ENCODE measurements at regions of chr13 and their contacts with region 1.

Region 1: GRCh38 chr13:80363890-80364503 is 23.1 kb upstream of the SPRY2 start:
- DNase-seq: no peak
- H3K4me3 Mint-ChIP-seq: no peak overlapping the region
- H3K27ac Mint-ChIP-seq: no peak overlapping the region
- H3K4me1 Mint-ChIP-seq: no peaks in the 10 kb centered on the region
- H3K27me3 Mint-ChIP-seq: peaks cover 1% of the 10 kb centered on the region

Region 2: DNA sequence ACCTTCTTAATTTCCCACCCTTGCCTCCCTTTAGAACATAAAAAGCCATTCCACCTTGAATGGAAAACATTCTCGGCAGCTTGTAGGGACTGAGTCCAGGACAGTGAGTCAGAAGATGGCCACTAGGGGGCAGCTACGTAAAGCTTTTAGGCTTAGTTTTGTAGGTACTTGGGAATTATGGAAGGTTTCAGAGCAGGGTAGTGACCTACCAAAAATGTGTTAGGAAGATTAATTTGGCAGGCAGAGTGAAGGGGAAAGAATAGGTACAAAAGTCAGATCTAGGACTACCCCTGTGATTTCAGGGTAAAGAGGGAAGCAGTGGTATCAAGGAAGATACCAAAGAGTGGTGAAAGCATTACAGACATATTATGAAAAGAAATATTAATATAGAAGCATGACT is 684.7 kb before region 1 on chr13:
- CTCF ChIA-PET with region 1: no interaction called
- POLR2A ChIA-PET with region 1: no interaction called
- intact Hi-C with region 1: loop called (anchors 2 kb)
- DNase-seq: peak; percentile 52
- H3K4me3 Mint-ChIP-seq: no peak overlapping the region
- H3K27ac Mint-ChIP-seq: no peak overlapping the region
- H3K4me1 Mint-ChIP-seq: no peaks in the 10 kb centered on the region
- H3K27me3 Mint-ChIP-seq: no peaks in the 10 kb centered on the region

Region 3: DNA sequence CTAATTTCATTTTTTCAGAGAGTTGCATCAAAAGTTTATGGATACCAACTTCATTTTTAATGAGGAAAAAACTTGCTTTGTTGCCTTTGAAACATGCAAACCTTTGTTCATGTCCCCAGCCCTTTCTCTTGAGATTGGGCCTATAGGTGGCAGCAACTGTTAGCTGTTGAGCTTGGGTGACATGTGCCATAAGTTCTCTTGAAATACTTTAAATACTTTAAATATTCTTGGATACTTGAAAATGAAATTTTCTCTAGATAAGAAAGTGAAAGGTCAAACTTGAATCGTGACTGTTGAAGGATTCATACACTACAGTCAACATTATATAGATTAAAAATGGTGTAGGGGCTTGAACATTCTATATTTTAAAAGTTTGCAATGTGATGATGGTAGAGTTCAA is 588.2 kb before region 1 on chr13:
- CTCF ChIA-PET with region 1: no interaction called
- POLR2A ChIA-PET with region 1: no interaction called
- intact Hi-C with region 1: loop called (anchors 5 kb)
- DNase-seq: no peak
- H3K4me3 Mint-ChIP-seq: no peak overlapping the region
- H3K27ac Mint-ChIP-seq: no peak overlapping the region
- H3K4me1 Mint-ChIP-seq: no peaks in the 10 kb centered on the region
- H3K27me3 Mint-ChIP-seq: no peaks in the 10 kb centered on the region